Body of pancreas (tissue), 4 donors: ENCODE measurements at regions of chr20 and their contacts with region 1.

Region 1: DNA sequence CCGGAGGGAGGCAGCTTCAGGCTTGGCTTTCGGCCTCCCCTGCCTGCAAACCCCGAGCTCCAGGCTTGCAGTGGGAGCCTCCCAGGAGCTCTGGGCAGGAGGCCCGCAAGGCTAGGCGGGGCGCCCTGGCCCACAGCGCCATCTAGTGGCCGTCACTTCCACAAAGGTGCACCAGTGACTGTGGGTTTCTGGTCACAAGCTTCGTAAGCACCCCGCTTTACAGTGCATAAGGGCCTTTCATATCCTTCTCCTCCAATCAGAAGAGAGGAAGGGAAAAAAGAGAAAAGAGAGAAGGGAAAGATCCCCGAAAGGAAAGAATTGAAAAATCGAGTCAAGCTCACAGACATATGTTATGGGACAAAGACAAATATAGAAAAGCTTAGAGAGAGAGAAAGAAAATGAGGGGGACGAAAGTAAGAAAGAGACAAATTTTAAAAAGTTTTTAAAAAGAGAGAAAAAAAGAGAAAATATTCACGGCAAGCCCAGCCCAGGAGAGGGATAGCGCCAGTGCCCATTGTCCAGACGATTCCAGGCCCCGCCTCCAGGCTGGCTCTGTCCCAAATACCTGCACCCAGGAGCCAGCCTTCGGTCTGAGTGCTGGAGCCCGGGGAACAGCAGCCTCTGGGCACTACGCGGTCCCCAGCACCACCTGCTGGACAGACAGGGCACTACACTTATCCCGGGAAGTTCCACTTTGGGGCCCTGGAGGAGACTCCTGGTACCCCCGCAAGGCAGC is 207.1 kb downstream of the PREX1 start:
- DNase-seq: peak; percentile 90 to 93 (median 92)
- ATAC-seq: peak; percentile 94
- H3K4me3 ChIP-seq: no peak overlapping the region
- H3K27ac ChIP-seq: no peak overlapping the region
- H3K4me1 ChIP-seq: peaks cover 12% of the 10 kb centered on the region
- H3K27me3 ChIP-seq: no peaks in the 10 kb centered on the region
- CTCF ChIP-seq: peak; percentile 73 to 97 (median 90)
- POLR2A ChIP-seq: no peak

Region 2: GRCh38 chr20:47677635-47678453 is 942.8 kb before region 1 on chr20:
- intact Hi-C with region 1: loop called (anchors 5 kb)
- DNase-seq: peak; percentile 51 to 76 (median 56)
- ATAC-seq: peak; percentile 62
- H3K4me3 ChIP-seq: no peak overlapping the region
- H3K27ac ChIP-seq: no peak overlapping the region
- H3K4me1 ChIP-seq: no peaks in the 10 kb centered on the region
- H3K27me3 ChIP-seq: no peaks in the 10 kb centered on the region
- CTCF ChIP-seq: peak; percentile 62 to 75 (median 70)
- POLR2A ChIP-seq: no peak

Region 3: GRCh38 chr20:47785854-47786764 is 834.6 kb before region 1 on chr20:
- intact Hi-C with region 1: loop called (anchors 10 kb)
- DNase-seq: peak; percentile 41 to 59 (median 46)
- ATAC-seq: peak; percentile 71
- H3K4me3 ChIP-seq: no peak overlapping the region
- H3K27ac ChIP-seq: peak overlapping the region in 2 of 4 donors; percentile 35 to 48
- H3K4me1 ChIP-seq: peaks cover 23% of the 10 kb centered on the region
- H3K27me3 ChIP-seq: peaks cover 0 to 12% of the 10 kb centered on the region in 2 donors
- CTCF ChIP-seq: peak in 6 of 7 experiments; percentile 20 to 60 (median 46)
- POLR2A ChIP-seq: peak in 1 of 3 donors; percentile 24

Region 4: GRCh38 chr20:48738399-48739304 is 118.0 kb after region 1 on chr20:
- intact Hi-C with region 1: no loop called
- DNase-seq: no peak
- ATAC-seq: no peak
- H3K4me3 ChIP-seq: no peak overlapping the region
- H3K27ac ChIP-seq: no peak overlapping the region
- H3K4me1 ChIP-seq: no peaks in the 10 kb centered on the region
- H3K27me3 ChIP-seq: no peaks in the 10 kb centered on the region
- CTCF ChIP-seq: no peak
- POLR2A ChIP-seq: no peak

Region 5: DNA sequence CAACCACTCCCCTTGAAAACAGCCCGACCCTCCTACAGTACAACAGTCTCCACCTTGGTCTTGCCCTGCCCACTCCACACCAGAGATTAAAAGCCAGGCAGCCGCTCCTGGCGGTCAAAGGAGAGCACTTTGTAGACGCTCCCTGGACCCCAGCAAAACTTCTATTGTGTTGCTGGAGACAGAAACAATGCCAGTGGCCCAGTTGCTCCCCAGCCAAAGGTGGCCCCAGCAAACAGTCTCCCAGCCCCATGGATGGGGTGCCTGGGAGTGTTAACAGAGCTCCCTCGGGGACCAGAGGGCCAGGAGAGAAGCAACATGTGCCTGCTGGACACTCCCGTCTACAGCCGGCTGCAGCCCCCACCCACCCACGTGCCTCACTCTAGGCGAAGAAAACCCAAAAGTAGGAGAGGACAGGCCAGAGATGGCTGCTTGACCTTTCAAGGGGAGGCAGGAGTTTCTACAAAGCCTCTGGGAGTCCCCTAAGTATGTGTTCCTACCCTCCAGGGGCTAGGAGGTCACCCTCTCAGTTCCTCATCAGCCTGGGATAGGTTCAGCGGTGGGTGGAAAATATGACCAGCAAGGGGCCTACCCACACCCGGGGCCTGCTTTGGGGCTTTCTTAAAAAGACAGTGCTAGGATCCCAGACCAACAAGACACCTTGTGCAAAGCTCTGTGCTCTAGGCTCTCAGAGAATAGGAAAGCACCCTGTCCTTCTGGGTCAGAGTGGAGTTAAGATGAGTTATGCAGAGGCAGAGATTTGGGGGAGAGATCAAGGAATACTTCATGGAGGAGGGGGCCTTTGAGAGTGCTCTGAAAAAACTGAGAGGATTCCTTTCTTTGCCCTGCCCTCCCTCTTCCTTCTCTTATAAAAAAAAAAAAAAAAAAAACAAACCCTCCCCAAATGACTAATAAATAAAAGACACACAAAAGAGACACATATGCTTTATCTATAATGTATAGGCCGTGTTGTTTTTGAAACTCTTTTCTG is 226.1 kb after region 1 on chr20:
- intact Hi-C with region 1: no loop called
- DNase-seq: no peak
- ATAC-seq: no peak
- H3K4me3 ChIP-seq: no peak overlapping the region
- H3K27ac ChIP-seq: no peak overlapping the region
- H3K4me1 ChIP-seq: no peaks in the 10 kb centered on the region
- H3K27me3 ChIP-seq: no peaks in the 10 kb centered on the region
- CTCF ChIP-seq: no peak
- POLR2A ChIP-seq: no peak